IMR-90 (cell line): ENCODE measurements at regions of chr5 and their contacts with region 1.

Region 1: DNA sequence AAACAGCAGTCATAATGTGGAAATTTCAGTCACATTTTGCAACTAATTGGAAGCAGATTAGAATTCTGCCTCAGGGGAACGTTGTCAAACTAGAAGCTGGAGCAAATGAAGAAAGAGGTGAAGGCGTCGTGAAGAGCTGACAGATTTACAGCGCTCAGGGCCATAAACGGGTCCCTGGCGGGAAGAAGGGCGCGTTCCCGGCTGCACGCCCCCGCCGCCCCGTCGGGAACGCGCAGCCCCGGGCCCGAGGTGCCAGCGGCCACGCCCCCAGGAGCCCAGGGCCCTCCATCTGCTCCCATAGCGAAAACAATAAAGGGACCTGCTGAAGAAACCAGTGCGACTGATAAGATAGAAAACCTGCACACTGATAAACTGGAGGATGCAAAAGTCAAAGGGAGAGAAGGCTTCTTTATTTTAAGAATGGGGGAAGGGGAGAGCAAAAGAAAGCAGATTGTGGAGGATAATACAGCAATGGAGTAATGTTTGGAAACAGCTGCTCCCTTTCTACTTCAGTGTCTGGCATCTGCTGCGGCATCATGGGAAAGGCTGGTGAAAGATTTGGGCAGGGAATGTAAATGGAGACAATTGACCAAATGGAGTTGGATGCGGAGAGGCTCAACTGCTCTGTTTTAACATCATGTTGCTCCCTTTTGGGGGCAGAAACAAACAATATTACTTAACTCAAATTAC is 11.1 kb downstream of the ZNF608 start:
- DNase-seq: no peak
- ATAC-seq: peak; percentile 35
- H3K4me3 ChIP-seq: peak overlapping the region; percentile 33
- H3K27ac ChIP-seq: peak overlapping the region; percentile 91; the same call in 1 of the 2 replicates
- H3K4me1 ChIP-seq: peaks cover 9% of the 10 kb centered on the region
- H3K27me3 ChIP-seq: no peaks in the 10 kb centered on the region; the same call in 1 of the 2 replicates
- CTCF ChIP-seq: no peak
- POLR2A ChIP-seq: no peak
- RAD21 ChIP-seq: no peak

Region 2: GRCh38 chr5:124140060-124140459 is 595.3 kb before region 1 on chr5:
- CTCF ChIA-PET with region 1: no interaction called
- POLR2A ChIA-PET with region 1: no interaction called
- dilution Hi-C with region 1: no loop called
- in situ Hi-C with region 1: no loop called
- intact Hi-C with region 1: no loop called
- DNase-seq: no peak
- ATAC-seq: no peak
- H3K4me3 ChIP-seq: no peak overlapping the region
- H3K27ac ChIP-seq: no peak overlapping the region
- H3K4me1 ChIP-seq: no peaks in the 10 kb centered on the region
- H3K27me3 ChIP-seq: no peaks in the 10 kb centered on the region
- CTCF ChIP-seq: no peak
- POLR2A ChIP-seq: no peak
- RAD21 ChIP-seq: no peak

Region 3: GRCh38 chr5:124764992-124765611 is 29.8 kb after region 1 on chr5:
- CTCF ChIA-PET with region 1: no interaction called
- POLR2A ChIA-PET with region 1: no interaction called
- dilution Hi-C with region 1: no loop called
- in situ Hi-C with region 1: no loop called
- intact Hi-C with region 1: no loop called
- DNase-seq: no peak
- ATAC-seq: no peak
- H3K4me3 ChIP-seq: no peak overlapping the region
- H3K27ac ChIP-seq: no peak overlapping the region
- H3K4me1 ChIP-seq: no peaks in the 10 kb centered on the region
- H3K27me3 ChIP-seq: no peaks in the 10 kb centered on the region
- CTCF ChIP-seq: no peak
- POLR2A ChIP-seq: no peak
- RAD21 ChIP-seq: no peak

Region 4: GRCh38 chr5:126531543-126532120 is 1796.3 kb after region 1 on chr5:
- CTCF ChIA-PET with region 1: no interaction called
- POLR2A ChIA-PET with region 1: no interaction called
- dilution Hi-C with region 1: no loop called
- in situ Hi-C with region 1: no loop called
- intact Hi-C with region 1: loop called (anchors 5 kb)
- DNase-seq: peak; percentile 62
- ATAC-seq: peak; percentile 68
- H3K4me3 ChIP-seq: no peak overlapping the region
- H3K27ac ChIP-seq: no peak overlapping the region
- H3K4me1 ChIP-seq: peaks cover 10% of the 10 kb centered on the region
- H3K27me3 ChIP-seq: no peaks in the 10 kb centered on the region
- CTCF ChIP-seq: no peak
- POLR2A ChIP-seq: no peak
- RAD21 ChIP-seq: no peak